Common myeloid progenitor, CD34-positive (primary cell): ENCODE measurements at regions of chr20 and their contacts with region 1.

Region 1: DNA sequence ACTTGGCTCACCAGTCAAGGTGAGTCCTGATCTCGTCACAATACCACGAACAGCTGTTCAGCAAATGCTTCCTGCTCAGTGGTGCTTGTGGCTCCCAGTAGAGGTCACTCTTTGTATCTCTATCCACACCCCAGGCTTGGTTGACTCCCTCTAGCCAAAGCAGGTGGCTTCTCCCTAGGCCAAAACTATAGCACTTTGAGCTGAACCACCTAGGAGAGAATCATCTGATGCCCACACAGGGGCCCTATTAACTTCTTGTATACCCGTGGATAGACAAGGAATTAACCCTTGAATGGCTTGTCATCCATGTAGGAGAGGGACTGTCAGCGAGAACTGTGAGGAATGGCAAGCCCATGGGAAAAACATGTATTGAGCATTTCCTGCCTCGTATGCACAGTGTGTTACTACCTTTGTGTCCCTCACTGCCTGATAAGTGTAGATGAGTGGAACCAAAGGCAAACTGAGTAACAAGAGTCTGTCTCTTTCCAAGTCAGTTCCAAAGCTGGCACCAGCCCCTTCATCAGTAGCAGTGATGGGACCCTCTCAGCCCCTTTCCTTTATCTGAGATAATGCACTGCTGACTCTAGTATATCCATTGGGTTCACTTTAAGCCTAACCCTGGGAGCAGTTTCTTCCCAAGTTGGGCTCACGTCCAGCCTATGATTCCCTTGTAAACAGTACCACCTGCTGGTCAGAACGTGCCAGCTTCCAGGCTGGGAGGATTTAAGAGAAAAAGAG is 42.5 kb downstream of the EIF2S2 start:
- DNase-seq: peak; percentile 72 to 82 (median 80)
- H3K4me3 ChIP-seq: no peak overlapping the region
- H3K27ac ChIP-seq: peak overlapping the region in 1 of 2 experiments; percentile 17
- H3K4me1 ChIP-seq: peaks cover 0 to 9% (median 4%) of the 10 kb centered on the region in 4 experiments
- H3K27me3 ChIP-seq: no peaks in the 10 kb centered on the region

Region 2: GRCh38 chr20:33862709-33863403 is 206.7 kb before region 1 on chr20:
- CTCF ChIA-PET with region 1: interaction called, 14 read pairs
- POLR2A ChIA-PET with region 1: no interaction called
- DNase-seq: peak; percentile 31 to 55 (median 46)
- H3K4me3 ChIP-seq: peak overlapping the region in 1 of 7 experiments; percentile 23
- H3K27ac ChIP-seq: no peak overlapping the region
- H3K4me1 ChIP-seq: peaks cover 2 to 26% (median 21%) of the 10 kb centered on the region in 4 experiments
- H3K27me3 ChIP-seq: no peaks in the 10 kb centered on the region

Region 3: DNA sequence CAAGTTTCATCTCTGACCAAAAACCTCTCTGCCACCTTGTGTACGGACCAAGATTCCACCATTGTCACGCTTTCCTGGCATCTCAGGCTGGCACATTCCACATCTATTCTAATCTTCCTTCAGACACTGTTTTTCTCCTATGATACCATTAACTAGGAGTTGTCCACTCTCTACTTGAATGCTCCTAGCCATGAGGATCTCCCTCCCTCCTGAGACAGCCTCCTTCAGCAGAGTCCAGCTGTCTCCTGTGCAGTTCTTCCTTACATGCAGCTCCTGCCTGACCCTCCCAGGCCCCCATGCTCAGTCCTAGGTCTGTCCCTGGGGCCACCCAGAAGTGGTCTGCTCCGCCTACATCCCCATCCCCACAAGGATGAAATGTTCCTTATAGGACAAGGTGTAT is 167.5 kb before region 1 on chr20:
- CTCF ChIA-PET with region 1: no interaction called
- POLR2A ChIA-PET with region 1: no interaction called
- DNase-seq: no peak
- H3K4me3 ChIP-seq: no peak overlapping the region
- H3K27ac ChIP-seq: no peak overlapping the region
- H3K4me1 ChIP-seq: no peaks in the 10 kb centered on the region
- H3K27me3 ChIP-seq: peaks cover 0 to 7% (median 3%) of the 10 kb centered on the region in 5 experiments

Region 4: DNA sequence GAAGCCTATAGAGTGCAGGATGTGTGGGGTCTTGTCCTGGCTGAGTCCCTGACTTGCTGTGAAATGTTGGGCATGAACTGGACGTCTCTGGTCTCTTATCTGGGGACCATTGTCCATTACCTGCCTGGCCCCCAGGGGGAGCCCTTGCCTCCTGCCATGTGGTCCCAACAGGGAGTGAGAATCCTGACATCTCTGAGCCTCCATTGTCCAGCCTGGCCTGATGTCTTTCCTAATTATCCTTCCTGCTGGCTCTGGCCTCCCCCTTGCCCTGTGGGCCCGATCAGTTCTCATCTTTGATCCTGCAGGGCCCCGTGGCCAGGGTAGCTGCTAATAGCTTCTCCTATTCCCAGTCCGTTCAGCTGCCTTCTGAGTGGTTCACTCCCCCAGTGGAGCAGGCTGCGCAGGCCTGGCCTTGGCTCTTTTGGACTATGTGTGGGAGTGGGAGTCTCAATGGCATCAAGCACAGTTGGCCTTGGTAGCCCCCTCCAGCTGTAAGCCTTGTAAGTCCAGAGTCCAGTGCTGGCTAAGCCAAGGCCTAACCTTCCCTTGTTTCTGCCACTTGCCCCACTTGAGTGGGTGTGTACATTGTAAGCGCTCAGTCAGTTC is 153.7 kb before region 1 on chr20:
- CTCF ChIA-PET with region 1: interaction called, 12 read pairs
- POLR2A ChIA-PET with region 1: no interaction called
- DNase-seq: peak; percentile 21 to 43 (median 23)
- H3K4me3 ChIP-seq: no peak overlapping the region
- H3K27ac ChIP-seq: no peak overlapping the region
- H3K4me1 ChIP-seq: peaks cover 0 to 4% (median 0%) of the 10 kb centered on the region in 4 experiments
- H3K27me3 ChIP-seq: peaks cover 0 to 4% (median 0%) of the 10 kb centered on the region in 5 experiments

Region 5: GRCh38 chr20:33933469-33933909 is 136.0 kb before region 1 on chr20:
- CTCF ChIA-PET with region 1: interaction called, 53 read pairs
- POLR2A ChIA-PET with region 1: no interaction called
- DNase-seq: peak; percentile 73 to 84 (median 83)
- H3K4me3 ChIP-seq: no peak overlapping the region
- H3K27ac ChIP-seq: no peak overlapping the region
- H3K4me1 ChIP-seq: no peaks in the 10 kb centered on the region
- H3K27me3 ChIP-seq: peaks cover 0 to 6% (median 0%) of the 10 kb centered on the region in 5 experiments

Region 6: DNA sequence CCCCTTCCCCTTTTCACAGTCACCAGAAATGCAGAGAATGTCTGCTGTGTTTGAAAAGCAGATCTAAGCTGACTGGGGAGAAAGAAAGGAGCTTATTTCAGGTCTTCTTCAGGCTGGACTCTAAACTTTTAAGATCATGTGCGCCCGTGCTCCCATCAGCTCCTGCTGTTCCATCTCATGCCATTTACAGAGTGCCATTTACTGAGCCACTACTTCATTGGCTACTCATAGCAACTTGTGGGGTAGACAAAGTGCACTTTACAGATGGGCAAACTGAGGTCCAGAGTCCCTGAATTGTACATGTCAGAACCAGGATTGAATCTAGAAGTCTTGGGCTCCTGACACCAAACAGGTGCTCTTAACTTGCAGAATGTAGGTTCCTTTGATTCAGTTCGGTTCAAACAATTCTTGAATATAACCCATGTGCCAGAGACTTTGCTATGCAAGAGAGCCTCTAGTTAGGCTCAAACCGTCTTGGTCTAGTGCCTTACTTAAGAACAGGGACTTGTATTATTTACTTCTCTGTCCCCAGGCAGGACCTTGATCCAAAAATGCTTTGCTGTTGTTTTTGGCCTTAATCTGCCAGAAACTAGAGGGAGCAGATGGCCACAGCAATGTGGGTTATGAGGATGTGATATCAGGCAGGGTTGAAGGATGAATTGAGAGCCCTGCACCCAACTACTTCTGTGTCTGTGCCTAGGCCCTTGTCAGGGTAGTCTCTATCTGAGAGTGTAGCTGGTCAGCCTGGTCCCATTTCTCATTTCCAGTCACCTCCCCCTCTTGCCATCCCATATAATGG is 19.4 kb before region 1 on chr20:
- CTCF ChIA-PET with region 1: interaction called, 11 read pairs
- POLR2A ChIA-PET with region 1: no interaction called
- DNase-seq: no peak
- H3K4me3 ChIP-seq: no peak overlapping the region
- H3K27ac ChIP-seq: no peak overlapping the region
- H3K4me1 ChIP-seq: peaks cover 3 to 14% (median 8%) of the 10 kb centered on the region in 4 experiments
- H3K27me3 ChIP-seq: no peaks in the 10 kb centered on the region

Region 7: GRCh38 chr20:34058831-34059230 is 10.7 kb before region 1 on chr20:
- CTCF ChIA-PET with region 1: interaction called, 17 read pairs
- POLR2A ChIA-PET with region 1: no interaction called
- DNase-seq: peak; percentile 56 to 92 (median 85)
- H3K4me3 ChIP-seq: no peak overlapping the region
- H3K27ac ChIP-seq: no peak overlapping the region
- H3K4me1 ChIP-seq: peaks cover 3 to 30% (median 16%) of the 10 kb centered on the region in 4 experiments
- H3K27me3 ChIP-seq: no peaks in the 10 kb centered on the region

Region 8: GRCh38 chr20:34129518-34130162 is 60.1 kb after region 1 on chr20:
- CTCF ChIA-PET with region 1: interaction called, 11 read pairs
- POLR2A ChIA-PET with region 1: no interaction called
- DNase-seq: peak; percentile 63 to 82 (median 79)
- H3K4me3 ChIP-seq: peak overlapping the region in 3 of 7 experiments; percentile 32 to 54 (median 36)
- H3K27ac ChIP-seq: no peak overlapping the region
- H3K4me1 ChIP-seq: peaks cover 0 to 4% (median 1%) of the 10 kb centered on the region in 4 experiments
- H3K27me3 ChIP-seq: no peaks in the 10 kb centered on the region

Region 9: DNA sequence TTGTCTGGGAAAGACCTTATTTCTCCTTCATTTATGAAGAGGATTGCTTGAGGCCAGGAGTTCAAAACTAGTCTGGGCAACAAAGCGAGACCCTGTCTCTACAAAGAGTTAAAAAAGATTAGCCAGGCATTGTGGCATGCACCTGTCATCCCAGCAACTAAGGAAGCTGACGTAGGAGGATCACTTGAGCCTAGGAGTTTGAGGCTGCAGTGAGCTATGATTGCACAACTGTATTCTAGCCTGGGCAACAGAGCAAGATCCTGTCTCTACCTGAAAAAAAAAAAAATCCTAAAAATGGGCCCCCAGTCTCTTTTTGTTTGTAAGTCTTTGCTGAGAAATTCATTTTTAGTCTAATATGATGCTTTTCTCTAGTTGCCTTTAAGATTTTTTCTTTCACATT is 71.8 kb after region 1 on chr20:
- CTCF ChIA-PET with region 1: no interaction called
- POLR2A ChIA-PET with region 1: no interaction called
- DNase-seq: no peak
- H3K4me3 ChIP-seq: no peak overlapping the region
- H3K27ac ChIP-seq: no peak overlapping the region
- H3K4me1 ChIP-seq: no peaks in the 10 kb centered on the region
- H3K27me3 ChIP-seq: peaks cover 0 to 2% (median 0%) of the 10 kb centered on the region in 5 experiments